GM23248 (cell line): ENCODE measurements at regions of chr2 and their contacts with region 1.

Region 1: DNA sequence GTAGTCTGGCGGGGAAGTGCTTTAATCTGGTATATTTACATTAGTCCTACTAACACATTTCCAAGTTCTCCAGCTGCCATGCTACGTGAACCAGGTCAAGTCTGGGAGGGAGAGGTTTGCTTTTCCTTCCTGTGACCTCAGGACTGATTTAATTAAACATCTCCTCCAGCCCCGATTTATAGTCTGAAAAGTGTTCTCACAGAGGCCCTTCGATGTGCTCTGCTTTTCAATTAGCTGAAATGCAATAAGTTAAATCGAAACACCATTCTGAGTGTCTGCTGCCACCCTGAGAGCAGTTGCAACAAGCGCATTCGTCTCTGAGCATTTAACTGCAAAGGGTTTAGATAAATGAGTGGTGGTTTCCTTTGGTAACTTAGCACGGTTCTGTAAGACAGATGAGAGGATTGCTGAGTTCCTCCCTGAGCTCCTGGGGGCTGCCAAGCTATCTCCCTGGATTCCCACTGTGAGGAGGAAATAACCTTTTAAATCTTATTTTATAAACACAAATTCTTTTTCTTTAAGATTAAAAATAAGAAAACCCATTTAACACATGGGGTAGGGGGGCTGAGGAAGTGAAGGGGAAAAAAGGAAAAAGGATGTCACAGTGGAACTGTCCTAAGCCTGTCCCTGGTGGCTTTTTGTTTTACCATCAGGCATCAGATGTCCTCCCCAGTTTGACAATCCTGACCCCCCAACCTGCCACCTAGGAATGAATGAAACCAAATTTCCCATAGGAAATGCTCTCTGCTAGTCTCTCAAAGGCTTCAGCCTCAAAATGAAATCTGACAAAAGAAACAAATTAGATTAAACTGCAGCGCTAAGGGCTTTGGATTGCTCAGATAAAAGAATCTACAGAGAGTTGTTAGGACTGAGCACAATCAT is 56.5 kb upstream of the CREB1 start:
- DNase-seq: peak; percentile 90
- H3K4me3 ChIP-seq: peak overlapping the region; percentile 40
- H3K27ac ChIP-seq: peak overlapping the region; percentile 61
- H3K4me1 ChIP-seq: peaks cover 31% of the 10 kb centered on the region
- H3K27me3 ChIP-seq: no peaks in the 10 kb centered on the region

Region 2: GRCh38 chr2:206693399-206694137 is 779.7 kb before region 1 on chr2:
- in situ Hi-C with region 1: loop called (anchors 25 kb)
- DNase-seq: peak; percentile 67
- H3K4me3 ChIP-seq: no peak overlapping the region
- H3K27ac ChIP-seq: no peak overlapping the region
- H3K4me1 ChIP-seq: no peaks in the 10 kb centered on the region
- H3K27me3 ChIP-seq: no peaks in the 10 kb centered on the region

Region 3: GRCh38 chr2:206798000-206798399 is 675.3 kb before region 1 on chr2:
- in situ Hi-C with region 1: loop called (anchors 5 kb)
- DNase-seq: no peak
- H3K4me3 ChIP-seq: no peak overlapping the region
- H3K27ac ChIP-seq: no peak overlapping the region
- H3K4me1 ChIP-seq: peaks cover 7% of the 10 kb centered on the region; the same call in 1 of the 2 replicates
- H3K27me3 ChIP-seq: no peaks in the 10 kb centered on the region

Region 4: DNA sequence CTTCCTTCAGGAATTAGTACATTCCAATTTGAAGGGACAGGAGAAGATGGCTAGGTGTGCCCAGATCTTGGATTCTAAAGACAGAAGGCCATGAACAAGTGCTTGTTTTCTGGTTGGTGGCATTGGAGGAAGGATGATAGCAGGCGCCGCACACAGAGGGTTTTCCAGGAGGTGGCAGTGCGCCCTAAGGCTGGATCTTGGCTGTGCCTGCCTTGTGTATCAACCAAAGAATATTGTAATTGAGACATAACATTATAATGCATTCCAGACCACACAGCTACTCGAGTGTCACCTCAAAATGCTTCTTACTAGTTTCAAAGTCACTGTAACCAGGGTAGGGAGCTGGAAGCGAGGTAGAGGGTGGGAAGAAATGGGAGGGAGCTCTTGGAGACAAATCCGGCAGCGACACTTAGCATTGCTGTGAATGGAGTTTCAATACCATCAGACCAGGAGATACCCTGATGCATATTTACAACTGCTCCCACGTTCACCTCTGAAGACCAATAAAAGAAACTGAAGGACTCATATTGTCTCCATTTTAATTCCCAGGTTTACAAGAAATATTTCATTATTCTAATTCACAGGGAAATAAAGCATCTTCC is 491.4 kb before region 1 on chr2:
- in situ Hi-C with region 1: loop called (anchors 5 kb)
- DNase-seq: peak; percentile 87
- H3K4me3 ChIP-seq: peak overlapping the region; percentile 33; the same call in 1 of the 2 replicates
- H3K27ac ChIP-seq: no peak overlapping the region
- H3K4me1 ChIP-seq: peaks cover 5% of the 10 kb centered on the region
- H3K27me3 ChIP-seq: no peaks in the 10 kb centered on the region

Region 5: DNA sequence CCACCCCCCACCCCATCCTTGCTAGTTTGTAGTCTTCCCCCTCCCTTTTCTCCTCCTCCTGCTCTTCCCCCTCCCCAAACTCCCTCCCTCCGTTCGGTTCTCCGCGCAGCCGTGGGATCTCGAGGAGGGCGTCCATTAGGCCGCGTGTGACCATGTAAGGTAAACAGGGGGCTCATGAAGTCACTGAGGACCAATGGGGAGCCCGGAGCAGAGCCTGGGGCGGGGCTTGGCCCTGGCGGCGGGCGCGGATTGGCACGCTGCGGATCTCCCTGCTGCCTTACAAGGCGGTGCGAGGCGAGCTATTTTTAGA is 307.3 kb before region 1 on chr2:
- in situ Hi-C with region 1: loop called (anchors 10 kb)
- DNase-seq: peak; percentile 100
- H3K4me3 ChIP-seq: peak overlapping the region; percentile 99
- H3K27ac ChIP-seq: peak overlapping the region; percentile 98
- H3K4me1 ChIP-seq: peaks cover 24% of the 10 kb centered on the region
- H3K27me3 ChIP-seq: no peaks in the 10 kb centered on the region

Region 6: GRCh38 chr2:207248702-207249377 is 224.4 kb before region 1 on chr2:
- in situ Hi-C with region 1: loop called (anchors 5 kb)
- DNase-seq: peak; percentile 34
- H3K4me3 ChIP-seq: no peak overlapping the region
- H3K27ac ChIP-seq: 0 out of 2 replicates have a peak overlapping the region, but pooled peaks have one; percentile 20
- H3K4me1 ChIP-seq: peaks cover 56% of the 10 kb centered on the region
- H3K27me3 ChIP-seq: no peaks in the 10 kb centered on the region

Region 7: DNA sequence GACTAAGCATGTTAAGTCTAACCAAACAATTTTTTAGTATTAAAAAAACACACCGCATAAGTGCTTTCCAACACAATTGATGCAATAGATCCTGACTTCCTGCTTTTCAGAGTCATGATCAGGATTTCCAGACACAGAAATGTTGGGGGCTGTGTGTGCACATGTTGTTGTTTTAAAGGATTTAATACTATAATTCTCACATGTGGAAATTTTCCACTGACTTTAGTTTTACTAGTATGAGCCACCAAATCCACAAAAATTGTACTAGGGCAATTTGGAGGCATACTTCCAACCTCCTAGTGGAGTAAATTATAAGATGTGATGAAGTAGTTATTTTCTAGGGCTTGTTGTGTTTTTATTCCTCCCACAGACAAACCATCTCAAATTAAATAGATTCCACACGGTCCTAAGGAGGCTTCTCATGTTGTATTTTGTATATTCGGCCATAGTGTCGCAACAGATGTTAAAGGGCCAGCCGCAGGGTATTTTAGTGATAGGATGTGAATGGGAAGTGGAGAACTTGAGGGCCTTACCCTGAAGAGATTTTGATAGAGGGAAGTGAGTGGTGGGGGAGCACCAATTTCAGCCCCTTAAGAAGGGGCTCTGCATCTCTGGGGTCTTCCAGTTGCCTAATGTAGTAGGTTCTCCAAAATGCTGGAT is 198.6 kb before region 1 on chr2:
- in situ Hi-C with region 1: no loop called
- DNase-seq: peak; percentile 6
- H3K4me3 ChIP-seq: no peak overlapping the region
- H3K27ac ChIP-seq: no peak overlapping the region
- H3K4me1 ChIP-seq: no peaks in the 10 kb centered on the region
- H3K27me3 ChIP-seq: no peaks in the 10 kb centered on the region

Region 8: GRCh38 chr2:208373460-208374089 is 900.3 kb after region 1 on chr2:
- in situ Hi-C with region 1: no loop called
- DNase-seq: peak; percentile 58
- H3K4me3 ChIP-seq: no peak overlapping the region
- H3K27ac ChIP-seq: no peak overlapping the region
- H3K4me1 ChIP-seq: peaks cover 16% of the 10 kb centered on the region
- H3K27me3 ChIP-seq: peaks cover 25% of the 10 kb centered on the region